Caco-2 (cell line): ENCODE measurements at regions of chr2 and their contacts with region 1.

Region 1: DNA sequence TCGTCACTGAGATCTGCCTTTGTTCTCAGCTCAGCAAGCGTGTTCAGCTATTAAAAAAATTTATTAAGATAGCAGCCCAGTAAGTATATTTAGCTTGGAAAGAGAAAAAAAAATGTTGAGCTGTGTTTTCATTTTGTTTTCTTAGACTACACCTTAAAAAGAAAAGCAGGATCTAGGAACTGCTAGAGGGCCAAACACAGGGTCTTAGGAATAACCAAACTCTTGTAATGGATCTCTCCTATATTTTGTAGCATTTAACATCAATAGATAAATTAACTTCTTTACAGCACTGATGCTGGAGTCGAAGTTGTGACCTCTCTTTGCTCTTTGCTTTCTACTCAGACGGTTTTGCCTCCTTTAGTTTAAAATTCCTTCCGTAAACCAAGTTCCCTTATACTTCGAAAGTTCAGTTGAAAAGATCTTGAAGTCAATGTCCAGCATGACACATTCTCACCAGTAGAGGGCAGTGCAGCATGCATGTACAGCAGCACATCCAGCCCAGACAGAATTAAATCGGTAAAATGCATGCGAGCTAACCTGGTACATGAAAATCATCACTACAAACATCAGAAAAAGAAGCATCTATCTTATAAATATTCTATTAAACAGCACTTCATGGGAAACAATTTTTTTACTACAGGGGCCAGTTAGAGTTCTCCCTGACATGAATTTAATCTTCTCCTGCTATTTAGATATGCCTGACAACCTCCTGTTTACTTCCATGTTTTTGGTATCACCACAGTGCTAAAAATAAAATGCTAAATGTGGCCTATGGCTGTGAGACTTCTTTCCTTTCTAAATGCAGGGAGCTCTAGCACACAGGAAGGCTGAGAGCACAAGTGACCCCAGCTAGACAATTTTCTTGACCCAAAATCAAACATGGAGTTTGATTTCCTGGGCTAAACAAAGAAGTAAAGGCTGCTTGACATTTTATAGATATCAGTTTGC is 48.2 kb upstream of the MAP3K20 start:
- DNase-seq: peak; percentile 74 to 85
- H3K4me3 ChIP-seq: no peak overlapping the region
- H3K4me3 Mint-ChIP-seq: peak overlapping the region; percentile 15
- H3K27ac Mint-ChIP-seq: peak overlapping the region; percentile 39
- H3K4me1 ChIP-seq: peaks cover 19% of the 10 kb centered on the region
- H3K4me1 Mint-ChIP-seq: peaks cover 17% of the 10 kb centered on the region
- H3K27me3 ChIP-seq: no peaks in the 10 kb centered on the region
- H3K27me3 Mint-ChIP-seq: no peaks in the 10 kb centered on the region
- CTCF ChIP-seq: peak; percentile 94

Region 2: GRCh38 chr2:172806493-172806892 is 221.0 kb before region 1 on chr2:
- CTCF ChIA-PET with region 1: no interaction called
- POLR2A ChIA-PET with region 1: no interaction called
- intact Hi-C with region 1: loop called (anchors 1 kb)
- DNase-seq: peak in 1 of 2 experiments; percentile 40
- H3K4me3 ChIP-seq: no peak overlapping the region
- H3K4me3 Mint-ChIP-seq: no peak overlapping the region
- H3K27ac Mint-ChIP-seq: no peak overlapping the region
- H3K4me1 ChIP-seq: no peaks in the 10 kb centered on the region
- H3K4me1 Mint-ChIP-seq: no peaks in the 10 kb centered on the region
- H3K27me3 ChIP-seq: no peaks in the 10 kb centered on the region; the same call in 1 of the 2 replicates
- H3K27me3 Mint-ChIP-seq: peaks cover 3% of the 10 kb centered on the region
- CTCF ChIP-seq: peak; percentile 80 to 90

Region 3: DNA sequence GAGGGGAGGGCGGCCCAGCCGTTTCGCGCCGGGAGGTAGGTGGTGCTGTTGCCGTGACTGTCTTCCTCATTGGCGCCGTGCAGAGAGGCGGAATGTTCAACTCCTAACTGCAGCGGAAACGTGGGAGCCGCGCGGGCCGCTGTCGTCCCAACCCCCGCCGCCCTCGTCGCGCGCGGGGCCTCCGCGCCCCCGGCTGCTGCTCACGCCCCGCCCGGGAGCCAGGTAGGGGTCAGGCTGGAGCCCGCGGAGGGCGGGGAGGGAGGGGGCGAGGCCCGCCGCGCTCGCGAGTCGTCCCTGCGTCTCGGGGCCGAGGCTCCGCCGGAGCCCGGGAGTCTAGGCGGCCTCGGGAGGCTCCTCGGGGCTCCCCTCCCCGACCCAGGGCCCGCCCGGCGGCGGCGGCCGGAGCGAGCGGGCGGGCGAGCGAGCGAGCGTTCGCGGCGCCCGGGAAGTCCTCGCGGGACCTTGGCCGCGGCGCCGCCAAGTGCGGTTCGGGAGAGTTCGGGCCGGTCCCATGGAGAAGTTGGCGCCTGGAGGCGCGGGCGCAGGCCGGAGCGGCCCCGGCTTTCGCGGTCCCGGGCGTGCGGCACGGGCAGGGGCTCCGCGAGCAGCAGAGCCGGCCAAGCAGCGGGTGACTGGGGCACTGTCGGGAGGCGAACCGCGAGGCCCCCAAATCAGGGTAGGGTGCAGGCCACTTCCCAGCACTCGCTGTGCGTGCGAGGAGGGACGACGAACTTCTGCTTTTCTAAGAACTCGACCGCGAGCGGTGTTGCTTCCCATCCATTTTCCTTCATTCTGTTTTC is 48.5 kb after region 1 on chr2 and contains the start of gene MAP3K20:
- CTCF ChIA-PET with region 1: interaction called, 7 read pairs
- POLR2A ChIA-PET with region 1: no interaction called
- intact Hi-C with region 1: loop called (anchors 2 kb)
- DNase-seq: peak; percentile 68 to 79
- H3K4me3 ChIP-seq: peak within 1 kb of the TSS; percentile 93
- H3K4me3 Mint-ChIP-seq: peak within 1 kb of the TSS; percentile 72
- H3K27ac Mint-ChIP-seq: peak within 1 kb of the TSS; percentile 58
- H3K4me1 ChIP-seq: peaks cover 9% of the 10 kb centered on the region
- H3K4me1 Mint-ChIP-seq: peaks cover 18% of the 10 kb centered on the region
- H3K27me3 ChIP-seq: no peaks in the 10 kb centered on the region
- H3K27me3 Mint-ChIP-seq: no peaks in the 10 kb centered on the region
- CTCF ChIP-seq: peak; percentile 22 to 46
- total RNA-seq, gene MAP3K20: 41.5 and 44.5 TPM in 2 replicates

Region 4: DNA sequence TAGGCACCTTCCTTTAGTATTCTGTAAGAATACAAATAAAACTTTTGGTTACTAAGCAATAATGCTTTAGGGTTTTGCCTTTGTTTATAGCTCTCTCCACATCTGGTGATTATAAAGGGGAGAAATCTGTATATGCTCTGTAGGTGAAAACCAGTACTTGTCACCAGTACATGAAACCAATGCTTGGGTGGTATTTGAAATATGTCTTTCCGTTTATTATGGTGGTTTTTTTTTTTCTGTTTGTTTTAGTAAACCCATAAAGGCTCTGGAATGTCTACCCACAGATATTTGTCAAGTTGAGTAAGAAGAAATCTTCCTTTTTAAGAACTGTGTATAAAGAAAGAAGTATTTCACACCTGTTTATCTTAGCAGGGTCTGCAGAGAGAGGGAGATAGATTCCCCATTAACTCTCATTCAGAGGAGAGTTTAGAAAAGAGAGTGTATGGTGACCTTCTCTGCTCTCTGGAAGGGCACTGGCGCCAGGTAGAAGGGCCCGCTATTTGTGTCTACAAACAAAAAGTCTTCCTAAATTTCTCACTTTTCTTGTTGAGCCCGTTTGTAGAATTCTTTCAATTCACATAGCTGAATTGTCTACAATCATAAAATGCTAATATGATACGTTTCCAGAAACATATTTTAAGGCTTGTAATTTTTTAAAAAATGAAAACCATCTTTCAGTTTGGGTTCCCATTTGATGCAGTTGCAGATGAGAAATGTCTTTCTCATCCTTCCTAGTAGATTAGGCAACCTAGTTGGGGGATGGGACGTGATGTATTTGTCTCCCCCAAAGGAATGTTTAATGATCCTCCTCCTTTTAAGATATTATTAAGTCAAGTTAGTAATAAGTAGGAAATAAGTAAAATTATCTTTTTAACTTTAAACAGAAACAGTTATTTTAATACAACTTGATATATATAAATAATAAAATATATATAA is 82.1 kb after region 1 on chr2:
- CTCF ChIA-PET with region 1: no interaction called
- POLR2A ChIA-PET with region 1: no interaction called
- intact Hi-C with region 1: loop called (anchors 1 kb)
- DNase-seq: peak in 1 of 2 experiments; percentile 66
- H3K4me3 ChIP-seq: no peak overlapping the region
- H3K4me3 Mint-ChIP-seq: peak overlapping the region; percentile 46
- H3K27ac Mint-ChIP-seq: peak overlapping the region; percentile 96
- H3K4me1 ChIP-seq: peaks cover 39% of the 10 kb centered on the region
- H3K4me1 Mint-ChIP-seq: peaks cover 39% of the 10 kb centered on the region
- H3K27me3 ChIP-seq: no peaks in the 10 kb centered on the region
- H3K27me3 Mint-ChIP-seq: no peaks in the 10 kb centered on the region
- CTCF ChIP-seq: no peak

Region 5: DNA sequence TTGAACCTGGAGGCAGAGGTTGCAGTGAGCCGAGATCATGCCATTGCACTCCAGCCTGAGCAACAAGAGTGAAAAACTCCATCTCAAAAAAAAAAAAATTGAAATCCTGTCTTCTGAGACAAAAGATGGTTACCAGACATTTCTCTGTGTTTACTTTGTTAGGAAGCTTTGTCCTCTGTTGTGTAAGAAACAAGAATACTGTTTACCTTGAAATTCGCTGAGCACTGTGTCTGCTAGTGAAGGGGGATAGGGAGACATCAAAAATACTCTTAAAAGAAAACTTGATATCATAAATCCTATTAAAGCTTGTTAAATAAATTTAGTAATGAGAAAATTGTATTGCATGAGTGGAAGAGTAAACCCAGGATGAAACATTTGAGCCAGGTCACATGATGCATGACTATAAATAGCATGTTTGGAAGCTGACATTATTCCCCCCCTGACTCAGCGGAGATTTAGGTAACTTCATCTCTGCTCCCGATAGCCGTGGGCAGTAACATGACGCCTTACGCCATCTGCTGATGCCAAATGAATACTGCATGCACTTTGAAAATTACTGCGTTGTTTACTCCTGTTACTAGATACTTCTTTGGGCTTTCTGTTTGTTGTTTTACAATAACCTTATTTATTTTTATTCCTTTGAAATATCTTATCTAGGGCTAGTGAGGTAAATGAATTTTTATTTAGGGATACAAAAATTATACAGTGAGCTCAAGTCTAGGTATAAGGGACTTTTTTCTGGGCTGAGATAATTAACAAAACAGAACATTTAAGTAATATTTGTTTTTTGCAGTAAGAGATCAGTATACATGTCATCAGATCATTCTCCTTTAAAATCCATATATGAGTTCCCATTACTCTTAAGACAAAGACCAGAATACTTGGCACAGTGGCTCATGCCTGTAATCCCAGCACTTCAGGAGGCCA is 183.1 kb after region 1 on chr2:
- CTCF ChIA-PET with region 1: interaction called, 39 read pairs
- POLR2A ChIA-PET with region 1: no interaction called
- intact Hi-C with region 1: loop called (anchors 1 kb)
- DNase-seq: peak; percentile 64 to 72
- H3K4me3 ChIP-seq: no peak overlapping the region
- H3K4me3 Mint-ChIP-seq: no peak overlapping the region
- H3K27ac Mint-ChIP-seq: no peak overlapping the region
- H3K4me1 ChIP-seq: no peaks in the 10 kb centered on the region; the same call in 1 of the 2 replicates
- H3K4me1 Mint-ChIP-seq: no peaks in the 10 kb centered on the region
- H3K27me3 ChIP-seq: no peaks in the 10 kb centered on the region
- H3K27me3 Mint-ChIP-seq: no peaks in the 10 kb centered on the region
- CTCF ChIP-seq: peak; percentile 81 to 91

Region 6: GRCh38 chr2:173354601-173355131 is 327.2 kb after region 1 on chr2 and contains the start of gene CDCA7:
- CTCF ChIA-PET with region 1: no interaction called
- POLR2A ChIA-PET with region 1: no interaction called
- intact Hi-C with region 1: loop called (anchors 1 kb)
- DNase-seq: peak; percentile 82 to 91
- H3K4me3 ChIP-seq: peak within 1 kb of the TSS; percentile 95
- H3K4me3 Mint-ChIP-seq: peak within 1 kb of the TSS; percentile 96
- H3K27ac Mint-ChIP-seq: peak within 1 kb of the TSS; percentile 97
- H3K4me1 ChIP-seq: peaks cover 22% of the 10 kb centered on the region
- H3K4me1 Mint-ChIP-seq: peaks cover 29% of the 10 kb centered on the region
- H3K27me3 ChIP-seq: no peaks in the 10 kb centered on the region
- H3K27me3 Mint-ChIP-seq: no peaks in the 10 kb centered on the region
- CTCF ChIP-seq: no peak
- total RNA-seq, gene CDCA7: 51.1 and 58.1 TPM in 2 replicates